ENCODE measurements at regions of chr1 and their contacts with region 1.

Region 1: GRCh38 chr1:160085686-160086455 is 4.5 kb downstream of the KCNJ9 start:
- DNase-seq: peak in 1 of 2 experiments; percentile 72
- H3K4me3 ChIP-seq: no peak overlapping the region
- H3K27ac ChIP-seq: no peak overlapping the region
- H3K4me1 ChIP-seq: no peaks in the 10 kb centered on the region
- H3K27me3 ChIP-seq: peaks cover 20% of the 10 kb centered on the region
- CTCF ChIP-seq: peak; percentile 83

Region 2: GRCh38 chr1:160291248-160292220 is 205.7 kb after region 1 on chr1:
- CTCF ChIA-PET with region 1: interaction called, 4 read pairs
- POLR2A ChIA-PET with region 1: no interaction called
- intact Hi-C with region 1: loop called (anchors 1 kb)
- DNase-seq: peak; percentile 43 to 58
- H3K4me3 ChIP-seq: no peak overlapping the region
- H3K27ac ChIP-seq: no peak overlapping the region
- H3K4me1 ChIP-seq: peaks cover 6% of the 10 kb centered on the region
- H3K27me3 ChIP-seq: no peaks in the 10 kb centered on the region
- CTCF ChIP-seq: peak; percentile 86

Region 3: GRCh38 chr1:160607011-160607671 is 521.3 kb after region 1 on chr1:
- CTCF ChIA-PET with region 1: no interaction called
- POLR2A ChIA-PET with region 1: no interaction called
- intact Hi-C with region 1: loop called (anchors 10 kb)
- DNase-seq: peak; percentile 31 to 68
- H3K4me3 ChIP-seq: no peak overlapping the region
- H3K27ac ChIP-seq: no peak overlapping the region
- H3K4me1 ChIP-seq: no peaks in the 10 kb centered on the region
- H3K27me3 ChIP-seq: peaks cover 26% of the 10 kb centered on the region; the same call in 1 of the 2 replicates
- CTCF ChIP-seq: peak; percentile 84

Measured in PC-9 (cell line).